AG04449 (cell line): ENCODE measurements at regions of chr12 and their contacts with region 1.

Region 1: GRCh38 chr12:90854136-90854689 is 100.8 kb downstream of the CCER1 start:
- DNase-seq: peak; percentile 12
- H3K4me3 ChIP-seq: no peak overlapping the region
- CTCF ChIP-seq: peak; percentile 64

Region 2: DNA sequence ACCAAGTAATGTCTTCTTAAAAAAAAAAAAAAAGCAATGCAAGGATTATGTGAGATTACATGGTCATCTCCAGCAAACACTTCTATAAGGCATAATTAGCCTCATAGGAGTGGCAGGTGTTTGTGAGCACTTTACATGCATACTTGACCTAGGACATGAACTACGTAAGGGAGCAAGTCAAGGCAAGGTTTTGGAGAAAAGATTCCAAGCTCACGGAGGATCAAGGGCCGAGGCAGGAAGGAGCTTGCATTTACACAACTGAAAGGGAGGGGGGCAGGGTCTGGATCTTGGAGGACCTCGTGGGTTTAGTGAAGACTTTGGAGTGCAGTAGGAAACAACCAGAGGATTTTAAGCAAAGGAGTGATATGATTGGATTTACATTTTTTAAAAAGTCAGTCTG is 11.7 kb before region 1 on chr12:
- CTCF ChIA-PET with region 1: interaction called, 22 read pairs
- POLR2A ChIA-PET with region 1: no interaction called
- DNase-seq: no peak
- H3K4me3 ChIP-seq: no peak overlapping the region
- CTCF ChIP-seq: no peak

Region 3: DNA sequence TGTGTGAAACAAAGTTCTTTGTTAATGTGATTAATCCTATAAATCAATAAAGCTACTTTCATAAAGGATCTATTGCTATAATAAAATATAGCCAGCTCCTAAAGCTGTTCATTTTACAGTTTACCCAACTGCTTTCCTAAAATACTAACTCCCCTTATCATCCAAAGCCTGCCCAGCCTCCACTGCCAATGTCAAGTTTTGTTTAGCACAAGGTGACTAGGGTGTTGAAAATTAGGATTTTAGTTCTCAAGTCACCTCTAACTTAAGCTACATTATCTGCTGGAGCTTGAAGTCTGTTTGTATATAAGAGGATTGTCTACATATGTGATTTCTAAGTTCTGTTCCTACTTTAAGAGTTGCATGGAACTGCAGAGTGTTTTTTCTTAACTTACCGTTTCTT is 14.4 kb after region 1 on chr12:
- CTCF ChIA-PET with region 1: interaction called, 43 read pairs
- POLR2A ChIA-PET with region 1: no interaction called
- DNase-seq: no peak
- H3K4me3 ChIP-seq: no peak overlapping the region
- CTCF ChIP-seq: no peak

Region 4: DNA sequence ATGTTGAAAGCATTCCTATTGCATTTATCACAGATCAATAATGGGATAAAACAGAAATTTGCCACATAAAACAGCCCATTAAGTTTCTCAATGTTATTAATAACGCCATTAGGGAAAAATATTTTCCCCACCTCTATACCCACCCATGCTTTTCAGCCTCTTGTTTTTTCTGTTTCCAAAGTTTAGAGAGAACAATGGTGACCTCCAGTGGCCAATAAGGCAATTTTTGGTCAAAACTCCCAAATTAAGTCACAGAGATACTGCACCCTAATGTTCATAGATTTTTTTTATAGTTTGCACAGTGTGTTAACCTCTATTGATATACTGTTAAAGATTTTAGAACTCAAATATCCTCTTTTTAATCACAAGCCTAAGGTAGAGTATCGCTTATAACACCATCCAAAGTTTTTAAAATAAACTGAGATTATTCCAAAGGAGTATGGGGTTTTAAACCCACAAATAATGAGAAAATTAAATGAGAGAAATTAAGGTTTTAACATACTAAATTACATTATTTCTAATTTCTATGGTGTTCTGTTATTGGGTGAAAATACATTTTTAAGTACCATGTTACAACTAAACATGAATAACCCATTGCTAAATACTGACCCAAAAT is 513.1 kb after region 1 on chr12:
- CTCF ChIA-PET with region 1: no interaction called
- POLR2A ChIA-PET with region 1: no interaction called
- DNase-seq: no peak
- H3K4me3 ChIP-seq: no peak overlapping the region
- CTCF ChIP-seq: peak; percentile 31